ENCODE measurements at regions of chr9 and their contacts with region 1.

Region 1: GRCh38 chr9:35489313-35490154 is at the start of gene RUSC2:
- DNase-seq: peak; percentile 68
- ATAC-seq: peak; percentile 85
- H3K4me3 ChIP-seq: peak within 1 kb of the TSS; percentile 60 to 68
- H3K27ac ChIP-seq: peak within 1 kb of the TSS; percentile 70
- H3K4me1 ChIP-seq: peaks cover 23 to 38% of the 10 kb centered on the region in 2 experiments
- H3K27me3 ChIP-seq: no peaks in the 10 kb centered on the region
- CTCF ChIP-seq: peak; percentile 32 to 49 (median 46); a peak in 4 of 6 replicates
- POLR2A ChIP-seq: peak; percentile 40
- RAD21 ChIP-seq: peak; percentile 48; the same call in 1 of the 2 replicates
- total RNA-seq, gene RUSC2: 11.6 TPM

Region 2: GRCh38 chr9:35510745-35511428 is 21.4 kb after region 1 on chr9:
- CTCF ChIA-PET with region 1: no interaction called
- POLR2A ChIA-PET with region 1: no interaction called
- RAD21 ChIA-PET with region 1: no interaction called
- intact Hi-C with region 1: loop called (anchors 1 kb)
- DNase-seq: peak; percentile 73
- ATAC-seq: peak; percentile 92
- H3K4me3 ChIP-seq: peak overlapping the region; percentile 1 to 21; a peak in 3 of 4 replicates
- H3K27ac ChIP-seq: peak overlapping the region; percentile 75
- H3K4me1 ChIP-seq: peaks cover 33 to 47% of the 10 kb centered on the region in 2 experiments
- H3K27me3 ChIP-seq: no peaks in the 10 kb centered on the region
- CTCF ChIP-seq: 0 out of 6 replicates have a peak, but pooled peaks of 2 of the 3 experiments have one; percentile 18 to 19
- POLR2A ChIP-seq: no peak
- RAD21 ChIP-seq: peak; percentile 32; the same call in 1 of the 2 replicates

Region 3: DNA sequence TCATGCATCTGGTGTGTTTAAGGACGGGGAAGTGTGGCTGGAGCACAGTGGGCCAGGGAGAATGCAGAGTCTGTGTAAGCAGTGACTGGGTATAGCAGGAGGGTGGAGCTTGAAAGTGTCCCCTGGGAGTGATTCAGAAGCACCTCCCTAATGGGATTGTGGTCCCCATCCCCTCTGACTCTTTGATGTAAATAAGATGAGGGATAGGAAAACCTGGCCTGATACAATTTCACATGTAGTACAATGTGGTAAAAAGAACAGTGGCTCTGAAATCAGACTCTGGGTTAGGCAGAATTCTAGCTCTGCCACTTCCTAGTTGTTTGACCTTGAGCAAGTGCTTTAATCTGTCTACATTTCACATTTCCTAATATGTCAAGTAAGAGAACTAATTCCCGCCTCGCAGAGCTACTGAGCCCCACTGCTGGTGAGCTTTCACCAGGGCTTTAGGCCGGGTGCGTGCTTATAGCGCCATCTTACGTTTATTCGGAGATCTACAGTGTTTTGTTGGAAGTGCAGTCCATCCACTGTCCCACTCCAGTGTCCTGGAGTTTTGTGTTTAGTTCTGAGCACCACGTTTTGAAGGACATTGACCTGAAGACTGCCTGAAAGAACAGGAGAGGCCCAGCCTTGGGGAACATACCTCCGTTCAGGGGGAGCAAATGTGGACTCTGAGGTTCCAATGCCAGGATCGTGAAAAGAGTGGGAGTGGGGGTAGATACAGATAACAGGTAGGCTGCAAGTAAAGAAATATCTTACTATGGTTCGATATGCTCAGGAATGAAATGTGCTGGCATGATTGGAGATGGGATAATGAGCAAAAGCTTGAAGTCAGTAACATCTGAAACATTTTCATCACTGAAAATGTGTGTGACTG is 64.4 kb after region 1 on chr9:
- CTCF ChIA-PET with region 1: interaction called, 17 read pairs
- POLR2A ChIA-PET with region 1: interaction called, 7 read pairs
- RAD21 ChIA-PET with region 1: interaction called, 5 read pairs
- intact Hi-C with region 1: loop called (anchors 2 kb)
- DNase-seq: peak; percentile 37
- ATAC-seq: peak; percentile 97
- H3K4me3 ChIP-seq: no peak overlapping the region
- H3K27ac ChIP-seq: no peak overlapping the region
- H3K4me1 ChIP-seq: no peaks in the 10 kb centered on the region; a peak in 1 of 4 replicates
- H3K27me3 ChIP-seq: no peaks in the 10 kb centered on the region
- CTCF ChIP-seq: peak; percentile 74 to 96 (median 95)
- POLR2A ChIP-seq: no peak
- RAD21 ChIP-seq: peak; percentile 99